CD4-positive, alpha-beta memory T cell (primary cell): ENCODE measurements at regions of chr1 and their contacts with region 1.

Region 1: GRCh38 chr1:92461364-92462097 is 25.2 kb downstream of the GFI1 start:
- DNase-seq: no peak
- H3K4me3 ChIP-seq: no peak overlapping the region
- H3K4me3 Mint-ChIP-seq: peak overlapping the region in 1 of 8 donors; percentile 50
- H3K27ac ChIP-seq: no peak overlapping the region
- H3K27ac Mint-ChIP-seq: no peak overlapping the region
- H3K4me1 ChIP-seq: peaks cover 33% of the 10 kb centered on the region
- H3K4me1 Mint-ChIP-seq: peaks cover 26 to 54% (median 34%) of the 10 kb centered on the region in 4 donors
- H3K27me3 ChIP-seq: no peaks in the 10 kb centered on the region
- H3K27me3 Mint-ChIP-seq: no peaks in the 10 kb centered on the region

Region 2: GRCh38 chr1:92317836-92318493 is 143.6 kb before region 1 on chr1:
- CTCF ChIA-PET with region 1: no interaction called
- POLR2A ChIA-PET with region 1: no interaction called
- intact Hi-C with region 1: loop called (anchors 5 kb)
- DNase-seq: peak; percentile 27 to 56 (median 40)
- H3K4me3 ChIP-seq: no peak overlapping the region
- H3K4me3 Mint-ChIP-seq: peak overlapping the region; percentile 55 to 79 (median 62)
- H3K27ac ChIP-seq: peak overlapping the region; percentile 36
- H3K27ac Mint-ChIP-seq: peak overlapping the region; percentile 59 to 94 (median 90)
- H3K4me1 ChIP-seq: peaks cover 63% of the 10 kb centered on the region
- H3K4me1 Mint-ChIP-seq: peaks cover 39 to 61% (median 48%) of the 10 kb centered on the region in 4 donors
- H3K27me3 ChIP-seq: no peaks in the 10 kb centered on the region
- H3K27me3 Mint-ChIP-seq: no peaks in the 10 kb centered on the region

Region 3: DNA sequence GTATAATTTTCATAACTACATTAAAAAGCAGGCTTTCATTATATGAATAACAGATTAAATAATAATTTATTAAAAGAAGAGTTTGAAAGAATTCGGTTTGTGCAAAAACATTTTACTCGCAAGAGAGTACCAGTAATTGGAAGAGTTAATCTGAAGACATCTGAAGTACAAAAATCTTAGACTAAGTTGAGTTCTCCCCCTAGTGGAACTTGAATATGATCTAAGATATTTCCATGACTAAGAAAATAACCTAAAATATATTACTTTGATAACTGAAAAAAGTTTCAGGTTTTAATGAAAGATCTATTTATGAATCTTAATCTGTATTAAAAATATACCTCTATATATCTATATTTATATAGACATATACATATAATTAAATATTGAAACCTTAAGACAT is 137.7 kb after region 1 on chr1:
- CTCF ChIA-PET with region 1: interaction called, 9 read pairs
- POLR2A ChIA-PET with region 1: no interaction called
- intact Hi-C with region 1: loop called (anchors 1 kb)
- DNase-seq: peak in 4 of 5 donors; percentile 36 to 46 (median 42)
- H3K4me3 ChIP-seq: no peak overlapping the region
- H3K4me3 Mint-ChIP-seq: no peak overlapping the region
- H3K27ac ChIP-seq: no peak overlapping the region
- H3K27ac Mint-ChIP-seq: peak overlapping the region in 1 of 7 donors; percentile 25
- H3K4me1 ChIP-seq: no peaks in the 10 kb centered on the region
- H3K4me1 Mint-ChIP-seq: peaks cover 0 to 4% (median 1%) of the 10 kb centered on the region in 4 donors
- H3K27me3 ChIP-seq: no peaks in the 10 kb centered on the region
- H3K27me3 Mint-ChIP-seq: no peaks in the 10 kb centered on the region